Dorsolateral prefrontal cortex (tissue), 120 donors: ENCODE measurements at regions of chrX and their contacts with region 1.

Region 1: GRCh38 chrX:106220177-106220576 is 52.1 kb downstream of the PWWP3B start:
- DNase-seq: no peak
- H3K4me3 ChIP-seq: peak overlapping the region in 4 of 59 donors; percentile 3 to 8 (median 6)
- H3K27ac ChIP-seq: peak overlapping the region in 24 of 59 donors; percentile 3 to 76 (median 42)
- H3K27me3 ChIP-seq: peaks cover 0 to 68% (median 7%) of the 10 kb centered on the region in 45 donors
- CTCF ChIP-seq: peak in 48 of 56 donors; percentile 15 to 69 (median 49)

Region 2: GRCh38 chrX:105375816-105376215 is 844.4 kb before region 1 on chrX:
- intact Hi-C with region 1: no loop called
- DNase-seq: no peak
- H3K4me3 ChIP-seq: no peak overlapping the region
- H3K27ac ChIP-seq: no peak overlapping the region
- H3K27me3 ChIP-seq: peaks cover 0 to 45% (median 7%) of the 10 kb centered on the region in 45 donors
- CTCF ChIP-seq: no peak

Region 3: DNA sequence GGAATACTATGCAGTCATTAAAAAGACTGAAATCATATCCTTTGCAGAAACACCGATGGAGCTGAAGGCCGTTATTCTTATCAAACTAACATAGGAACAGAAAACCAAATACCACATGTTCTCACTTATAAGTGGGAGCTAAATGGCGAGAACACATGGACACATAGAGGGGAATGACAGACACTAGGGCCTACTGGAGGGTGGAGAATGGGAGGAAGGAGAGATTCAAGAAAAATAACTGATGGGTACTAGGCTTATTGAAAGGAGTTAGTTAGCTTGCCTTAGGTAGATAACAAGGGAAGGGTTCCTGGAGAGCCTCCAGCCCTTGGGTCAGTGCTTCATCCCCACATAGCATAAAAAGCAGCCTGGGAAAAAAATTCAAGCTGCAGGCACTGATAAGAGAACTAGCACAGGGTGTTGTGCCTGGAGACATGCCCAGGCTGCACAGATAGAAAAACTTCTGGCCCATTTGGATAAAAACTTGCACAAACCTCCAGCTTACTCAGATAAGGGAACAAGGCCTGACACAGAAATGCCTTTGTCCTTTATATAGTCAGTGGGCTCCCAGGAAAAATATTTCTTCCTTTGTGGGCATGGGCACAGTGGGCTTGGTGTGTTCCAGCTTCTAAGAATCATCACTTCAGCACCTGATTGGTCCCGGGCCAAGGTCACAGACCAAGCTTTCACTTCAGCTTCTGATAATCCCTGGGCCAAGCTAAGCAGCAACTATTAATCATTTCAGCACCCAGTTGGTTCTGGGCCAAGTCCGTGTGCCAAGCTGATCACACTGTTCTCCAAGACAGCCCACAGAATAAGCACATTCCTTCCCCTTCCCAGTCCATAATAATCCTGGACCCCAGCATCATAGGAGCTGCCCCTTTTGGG is 75.2 kb before region 1 on chrX:
- intact Hi-C with region 1: no loop called
- DNase-seq: no peak
- H3K4me3 ChIP-seq: no peak overlapping the region
- H3K27ac ChIP-seq: no peak overlapping the region
- H3K27me3 ChIP-seq: peaks cover 0 to 50% (median 4%) of the 10 kb centered on the region in 45 donors
- CTCF ChIP-seq: no peak

Region 4: GRCh38 chrX:106170318-106170717 is 49.9 kb before region 1 on chrX:
- intact Hi-C with region 1: loop called in 1 of 2 experiments (anchors 5 kb)
- DNase-seq: peak in 1 of 10 donors; percentile 8
- H3K4me3 ChIP-seq: no peak overlapping the region
- H3K27ac ChIP-seq: no peak overlapping the region
- H3K27me3 ChIP-seq: peaks cover 0 to 79% (median 17%) of the 10 kb centered on the region in 45 donors
- CTCF ChIP-seq: peak in 54 of 56 donors; percentile 22 to 75 (median 56)

Region 5: GRCh38 chrX:106619797-106620196 is 399.6 kb after region 1 on chrX:
- intact Hi-C with region 1: no loop called
- DNase-seq: no peak
- H3K4me3 ChIP-seq: no peak overlapping the region
- H3K27ac ChIP-seq: no peak overlapping the region
- H3K27me3 ChIP-seq: peaks cover 0 to 78% (median 13%) of the 10 kb centered on the region in 45 donors
- CTCF ChIP-seq: peak in 47 of 56 donors; percentile 14 to 62 (median 43)